Right lobe of liver (tissue), 6 donors: ENCODE measurements at regions of chr17 and their contacts with region 1.

Region 1: DNA sequence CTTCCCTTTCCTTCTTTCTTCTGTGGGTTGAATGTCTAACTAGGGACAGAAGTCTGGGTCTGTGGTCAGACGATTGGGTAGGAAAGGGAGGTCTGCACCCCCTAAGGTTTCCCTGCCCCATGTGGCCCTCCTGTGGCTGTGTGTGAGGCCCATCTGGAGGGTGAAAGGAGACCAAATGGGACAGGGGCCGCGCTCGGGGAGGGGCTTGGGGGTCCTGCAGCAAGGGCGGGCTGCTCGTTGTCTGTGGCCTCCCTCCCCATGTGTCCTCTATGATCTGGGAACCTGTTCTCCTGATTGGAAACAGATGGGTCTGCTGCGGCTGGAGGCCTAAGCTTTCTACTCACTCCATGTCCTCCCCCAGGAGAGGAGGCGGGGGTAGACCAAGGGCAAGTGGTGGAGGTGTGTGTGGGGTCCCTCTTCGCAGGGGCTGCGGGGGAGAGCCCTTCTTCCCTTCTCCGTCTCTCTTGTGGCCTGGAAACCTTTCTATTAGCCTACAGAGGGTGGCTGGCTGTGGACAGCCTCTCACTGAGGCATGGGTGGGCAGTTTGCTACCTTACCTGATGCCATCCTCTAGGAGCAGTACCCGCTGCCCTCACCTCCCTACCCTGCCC is 18.6 kb downstream of the IGFBP4 start:
- DNase-seq: no peak
- ATAC-seq: peak; percentile 0 to 7 (median 2)
- H3K4me3 ChIP-seq: no peak overlapping the region
- H3K27ac ChIP-seq: peak overlapping the region; percentile 22 to 49 (median 26)
- H3K4me1 ChIP-seq: peaks cover 0 to 64% (median 16%) of the 10 kb centered on the region in 4 donors
- H3K27me3 ChIP-seq: no peaks in the 10 kb centered on the region
- CTCF ChIP-seq: no peak
- POLR2A ChIP-seq: peak; percentile 37

Region 2: GRCh38 chr17:40536295-40537171 is 74.7 kb after region 1 on chr17:
- intact Hi-C with region 1: loop called in 1 of 2 experiments (anchors 10 kb)
- DNase-seq: no peak
- ATAC-seq: peak in 2 of 4 donors; percentile 1 to 2
- H3K4me3 ChIP-seq: no peak overlapping the region
- H3K27ac ChIP-seq: peak overlapping the region in 1 of 3 donors; percentile 63
- H3K4me1 ChIP-seq: peaks cover 0 to 53% (median 16%) of the 10 kb centered on the region in 4 donors
- H3K27me3 ChIP-seq: no peaks in the 10 kb centered on the region
- CTCF ChIP-seq: no peak
- POLR2A ChIP-seq: no peak